GM13976 (cell line): ENCODE measurements at regions of chr22 and their contacts with region 1.

Region 1: GRCh38 chr22:17496841-17497240 is 66.5 kb upstream of the SLC25A18 start:
- DNase-seq: no peak
- CTCF ChIP-seq: no peak

Region 2: GRCh38 chr22:17176715-17177114 is 320.1 kb before region 1 on chr22:
- in situ Hi-C with region 1: loop called (anchors 5 kb)
- DNase-seq: no peak
- CTCF ChIP-seq: no peak